OCI-LY7 (cell line): ENCODE measurements at regions of chr20 and their contacts with region 1.

Region 1: DNA sequence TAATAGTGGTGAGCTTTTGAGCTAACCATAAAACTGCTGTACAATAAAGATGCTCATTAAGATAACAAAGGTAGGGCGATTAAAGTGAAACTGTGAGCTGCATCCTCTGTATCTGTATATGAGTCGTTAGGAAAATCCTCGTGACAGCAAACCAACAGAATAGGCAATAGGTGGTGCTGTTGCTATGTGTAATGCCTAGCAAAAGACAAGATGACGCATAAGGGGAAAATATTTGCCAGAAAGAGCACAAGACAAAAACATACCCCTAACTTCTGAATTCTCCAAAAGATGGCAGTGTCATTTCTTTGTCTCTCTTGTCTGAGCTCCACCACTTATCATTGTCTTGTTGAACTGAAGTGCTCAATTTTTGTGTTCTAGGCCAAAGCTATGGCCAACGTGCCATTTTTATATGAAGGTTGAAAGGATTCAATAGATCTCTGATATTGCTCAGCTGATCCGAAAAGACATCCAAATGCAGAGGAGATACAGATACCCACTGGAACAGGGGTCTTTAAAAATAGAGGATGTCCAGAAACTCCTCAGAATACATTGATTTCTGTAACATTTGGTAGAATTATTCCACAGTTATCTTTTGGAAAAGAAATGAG is 56.3 kb upstream of the ANKEF1 start:
- DNase-seq: peak; percentile 72
- H3K4me3 ChIP-seq: no peak overlapping the region
- H3K27ac ChIP-seq: no peak overlapping the region
- H3K4me1 ChIP-seq: no peaks in the 10 kb centered on the region
- CTCF ChIP-seq: peak; percentile 89

Region 2: GRCh38 chr20:9616833-9617489 is 361.5 kb before region 1 on chr20:
- CTCF ChIA-PET with region 1: no interaction called
- POLR2A ChIA-PET with region 1: no interaction called
- intact Hi-C with region 1: loop called (anchors 2 kb)
- DNase-seq: peak; percentile 78
- H3K4me3 ChIP-seq: peak overlapping the region; percentile 42
- H3K27ac ChIP-seq: no peak overlapping the region
- H3K4me1 ChIP-seq: peaks cover 22% of the 10 kb centered on the region
- CTCF ChIP-seq: peak; percentile 97

Region 3: GRCh38 chr20:10225439-10226060 is 247.0 kb after region 1 on chr20:
- CTCF ChIA-PET with region 1: no interaction called
- POLR2A ChIA-PET with region 1: no interaction called
- intact Hi-C with region 1: loop called (anchors 10 kb)
- DNase-seq: peak; percentile 5
- H3K4me3 ChIP-seq: no peak overlapping the region
- H3K27ac ChIP-seq: no peak overlapping the region
- H3K4me1 ChIP-seq: no peaks in the 10 kb centered on the region
- CTCF ChIP-seq: peak; percentile 64

Region 4: GRCh38 chr20:10536531-10536930 is 558.0 kb after region 1 on chr20:
- CTCF ChIA-PET with region 1: no interaction called
- POLR2A ChIA-PET with region 1: no interaction called
- intact Hi-C with region 1: loop called (anchors 10 kb)
- DNase-seq: peak; percentile 3
- H3K4me3 ChIP-seq: no peak overlapping the region
- H3K27ac ChIP-seq: no peak overlapping the region
- H3K4me1 ChIP-seq: no peaks in the 10 kb centered on the region
- CTCF ChIP-seq: peak; percentile 68